ENCODE measurements at regions of chr18 and their contacts with region 1.

Region 1: GRCh38 chr18:48037481-48038271 is 107.2 kb upstream of the SMAD2 start:
- DNase-seq: peak; percentile 51
- H3K4me3 ChIP-seq: no peak overlapping the region
- H3K27ac ChIP-seq: peak overlapping the region in 1 of 2 experiments; percentile 100; a peak in 2 of 4 replicates
- H3K4me1 ChIP-seq: peaks cover 0 to 73% of the 10 kb centered on the region in 2 experiments; a peak in 1 of 4 replicates
- H3K27me3 ChIP-seq: no peaks in the 10 kb centered on the region
- CTCF ChIP-seq: peak; percentile 31
- EP300 ChIP-seq: no peak
- RAD21 ChIP-seq: peak; percentile 70

Region 2: GRCh38 chr18:47917923-47918610 is 119.6 kb before region 1 on chr18:
- CTCF ChIA-PET with region 1: no interaction called
- POLR2A ChIA-PET with region 1: no interaction called
- DNase-seq: no peak
- H3K4me3 ChIP-seq: no peak overlapping the region
- H3K27ac ChIP-seq: no peak overlapping the region
- H3K4me1 ChIP-seq: peaks cover 0 to 18% of the 10 kb centered on the region in 2 experiments; a peak in 3 of 4 replicates
- H3K27me3 ChIP-seq: no peaks in the 10 kb centered on the region
- CTCF ChIP-seq: no peak
- EP300 ChIP-seq: no peak
- RAD21 ChIP-seq: no peak

Region 3: GRCh38 chr18:48059455-48060010 is 21.9 kb after region 1 on chr18:
- CTCF ChIA-PET with region 1: interaction called, 12 read pairs
- POLR2A ChIA-PET with region 1: interaction called, 7 read pairs
- DNase-seq: peak; percentile 65
- H3K4me3 ChIP-seq: no peak overlapping the region
- H3K27ac ChIP-seq: peak overlapping the region in 1 of 2 experiments; percentile 74; a peak in 2 of 4 replicates
- H3K4me1 ChIP-seq: peaks cover 0 to 25% of the 10 kb centered on the region in 2 experiments; a peak in 1 of 4 replicates
- H3K27me3 ChIP-seq: no peaks in the 10 kb centered on the region
- CTCF ChIP-seq: no peak
- EP300 ChIP-seq: no peak
- RAD21 ChIP-seq: no peak; the same call in 1 of the 2 replicates

Region 4: DNA sequence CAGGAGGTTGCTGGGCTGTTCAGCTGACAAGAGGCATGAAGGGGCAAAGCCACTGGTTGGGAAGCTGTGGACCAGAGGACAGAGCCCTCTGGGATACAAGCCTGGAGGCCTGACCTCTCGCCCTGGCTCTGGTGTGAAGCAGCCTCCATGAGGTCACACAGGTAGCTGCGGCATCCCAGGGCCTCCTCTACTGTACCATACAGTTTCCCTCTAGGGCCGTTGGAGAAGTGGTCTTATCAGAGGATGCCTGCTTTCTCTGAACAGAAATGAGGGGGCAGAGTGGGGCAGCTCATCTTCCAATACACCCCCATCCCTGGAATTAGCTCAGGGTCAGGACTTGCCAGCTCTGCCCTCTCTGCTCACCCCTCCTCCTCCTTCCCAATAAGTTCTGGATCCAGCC is 27.9 kb after region 1 on chr18:
- CTCF ChIA-PET with region 1: interaction called, 8 read pairs
- POLR2A ChIA-PET with region 1: interaction called, 15 read pairs
- DNase-seq: peak; percentile 46
- H3K4me3 ChIP-seq: no peak overlapping the region
- H3K27ac ChIP-seq: peak overlapping the region in 1 of 2 experiments; percentile 100; a peak in 2 of 4 replicates
- H3K4me1 ChIP-seq: peaks cover 0 to 48% of the 10 kb centered on the region in 2 experiments; a peak in 2 of 4 replicates
- H3K27me3 ChIP-seq: no peaks in the 10 kb centered on the region
- CTCF ChIP-seq: no peak
- EP300 ChIP-seq: no peak
- RAD21 ChIP-seq: no peak